ENCODE measurements at regions of chr17 and their contacts with region 1.

Region 1: DNA sequence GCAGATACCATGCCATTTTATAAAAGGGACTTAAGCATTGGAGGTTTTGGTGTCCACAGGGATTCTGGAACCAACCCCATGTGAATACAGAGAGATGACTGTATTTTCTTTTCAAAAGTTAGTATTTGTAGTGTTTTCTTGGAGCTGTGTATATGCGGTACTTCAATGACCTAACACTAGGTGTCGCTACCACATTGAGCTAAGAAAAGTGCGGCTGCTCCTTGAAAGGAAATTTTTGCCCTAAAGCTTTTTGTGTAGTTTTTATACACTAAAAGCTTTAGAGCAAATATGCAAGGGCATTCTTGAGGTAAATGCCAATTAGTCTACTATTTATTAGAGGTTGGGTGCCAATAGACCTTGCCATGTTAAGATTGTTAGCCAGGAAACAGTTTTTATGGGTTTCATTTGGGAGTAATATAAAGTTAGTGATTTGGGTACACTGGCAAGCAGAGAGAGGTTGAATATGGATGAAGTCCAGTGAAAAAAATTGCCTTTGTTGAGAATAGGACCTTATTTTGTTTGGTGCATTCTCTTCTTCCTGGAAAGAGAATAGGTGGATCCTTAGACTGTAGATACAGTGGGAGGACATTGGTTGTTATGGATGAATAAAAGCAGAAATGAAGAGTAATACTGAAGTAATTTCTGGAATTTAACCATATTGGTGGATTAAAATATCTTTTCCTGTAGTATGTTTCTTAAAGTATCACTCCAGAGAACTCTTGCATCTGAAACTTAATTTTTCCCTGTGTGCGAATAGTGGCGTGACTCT is 43.3 kb downstream of the BCAS3 start:
- DNase-seq: no peak
- H3K4me3 ChIP-seq: no peak overlapping the region
- H3K27ac ChIP-seq: no peak overlapping the region
- H3K4me1 ChIP-seq: peaks cover 0 to 3% of the 10 kb centered on the region in 2 donors
- H3K27me3 ChIP-seq: no peaks in the 10 kb centered on the region
- CTCF ChIP-seq: peak; percentile 76 to 88 (median 87)

Region 2: DNA sequence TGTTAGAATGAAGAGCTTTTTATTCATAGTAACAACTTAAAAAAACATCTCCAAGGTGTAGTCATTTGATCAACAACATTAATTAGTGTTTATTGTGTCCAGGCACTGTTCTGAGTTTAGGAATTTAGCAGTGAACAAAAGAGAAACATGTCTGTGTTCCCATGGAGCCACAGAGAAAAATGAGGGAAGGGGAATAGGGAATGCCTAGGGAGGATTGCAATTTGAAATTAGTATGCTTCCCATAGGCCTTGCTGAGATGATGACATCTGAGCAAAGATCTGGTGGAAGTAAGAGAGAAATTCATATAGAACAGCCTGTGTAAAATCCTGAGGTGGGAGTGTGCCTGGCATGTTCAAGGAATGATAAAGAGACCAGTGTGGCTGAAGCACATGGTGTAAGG is 274.7 kb after region 1 on chr17:
- intact Hi-C with region 1: loop called (anchors 5 kb)
- DNase-seq: no peak
- H3K4me3 ChIP-seq: no peak overlapping the region
- H3K27ac ChIP-seq: no peak overlapping the region
- H3K4me1 ChIP-seq: no peaks in the 10 kb centered on the region
- H3K27me3 ChIP-seq: no peaks in the 10 kb centered on the region
- CTCF ChIP-seq: no peak